Ascending aorta (tissue), 2 donors: ENCODE measurements at regions of chr5 and their contacts with region 1.

Region 1: DNA sequence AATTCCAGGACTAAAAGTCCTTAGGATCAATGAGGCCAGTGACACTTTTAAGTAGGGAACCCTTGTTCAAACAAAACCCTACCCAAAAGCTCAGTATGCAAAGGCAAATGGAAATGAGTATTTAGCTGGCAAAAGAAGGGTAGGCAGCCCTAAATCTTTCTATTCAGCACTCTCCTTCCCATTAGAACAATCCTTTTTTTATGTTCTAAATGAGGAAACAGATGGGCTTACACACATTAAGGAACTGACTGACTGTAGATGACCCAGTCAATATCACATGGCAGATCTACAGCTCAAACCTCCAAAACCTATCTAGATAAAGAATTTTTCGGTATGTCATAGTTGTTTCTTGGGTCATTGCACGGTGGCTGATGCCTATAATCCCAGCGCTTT is 7.2 kb downstream of the CSNK1A1 start:
- DNase-seq: no peak
- H3K4me3 ChIP-seq: peak overlapping the region in 1 of 2 donors; percentile 7
- H3K27ac ChIP-seq: peak overlapping the region; percentile 24 to 54
- H3K4me1 ChIP-seq: peaks cover 15 to 64% of the 10 kb centered on the region in 2 donors
- H3K27me3 ChIP-seq: no peaks in the 10 kb centered on the region
- CTCF ChIP-seq: no peak

Region 2: GRCh38 chr5:149504677-149505076 is 39.3 kb before region 1 on chr5:
- intact Hi-C with region 1: loop called (anchors 5 kb)
- DNase-seq: no peak
- H3K4me3 ChIP-seq: no peak overlapping the region
- H3K27ac ChIP-seq: no peak overlapping the region
- H3K4me1 ChIP-seq: no peaks in the 10 kb centered on the region
- H3K27me3 ChIP-seq: no peaks in the 10 kb centered on the region
- CTCF ChIP-seq: no peak